ENCODE measurements at regions of chr12 and their contacts with region 1.

Region 1: DNA sequence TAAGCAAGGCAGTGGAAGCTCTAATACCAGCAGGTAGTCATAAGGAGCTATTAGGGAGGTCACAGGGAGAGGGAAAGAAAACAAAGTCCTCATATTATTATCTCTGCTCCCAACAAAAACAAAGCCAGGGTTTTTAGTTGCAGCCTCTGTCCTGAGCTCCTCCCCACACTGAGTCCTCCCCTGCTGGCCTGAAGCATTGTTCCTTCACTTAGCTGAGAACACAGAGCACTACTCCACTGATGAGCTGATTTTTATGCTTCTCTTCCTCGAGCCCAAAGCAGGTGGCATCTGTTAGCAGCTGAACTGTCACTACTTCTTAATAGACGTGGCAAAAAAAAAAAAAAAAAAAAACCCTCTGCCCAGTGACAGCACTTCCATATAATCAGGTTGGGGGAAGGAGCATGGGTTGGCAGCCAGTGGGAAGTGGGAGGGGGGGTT is 10.5 kb upstream of the STAC3 start:
- DNase-seq: no peak
- ATAC-seq: no peak
- H3K4me3 ChIP-seq: no peak overlapping the region
- H3K27ac ChIP-seq: no peak overlapping the region
- H3K4me1 ChIP-seq: no peaks in the 10 kb centered on the region
- H3K27me3 ChIP-seq: no peaks in the 10 kb centered on the region
- CTCF ChIP-seq: no peak
- EP300 ChIP-seq: no peak
- POLR2A ChIP-seq: no peak
- RAD21 ChIP-seq: no peak

Region 2: GRCh38 chr12:57213058-57213715 is 48.3 kb before region 1 on chr12:
- CTCF ChIA-PET with region 1: interaction called, 13 read pairs
- POLR2A ChIA-PET with region 1: no interaction called
- RAD21 ChIA-PET with region 1: no interaction called
- SMC1A ChIA-PET with region 1: no interaction called
- in situ Hi-C with region 1: no loop called
- intact Hi-C with region 1: no loop called
- DNase-seq: peak; percentile 27
- ATAC-seq: peak; percentile 79
- H3K4me3 ChIP-seq: no peak overlapping the region
- H3K27ac ChIP-seq: no peak overlapping the region
- H3K4me1 ChIP-seq: peaks cover 13% of the 10 kb centered on the region
- H3K27me3 ChIP-seq: peaks cover 16 to 20% of the 10 kb centered on the region in 2 experiments
- CTCF ChIP-seq: peak; percentile 94 to 97 (median 97)
- EP300 ChIP-seq: no peak
- POLR2A ChIP-seq: no peak
- RAD21 ChIP-seq: peak; percentile 84

Region 3: DNA sequence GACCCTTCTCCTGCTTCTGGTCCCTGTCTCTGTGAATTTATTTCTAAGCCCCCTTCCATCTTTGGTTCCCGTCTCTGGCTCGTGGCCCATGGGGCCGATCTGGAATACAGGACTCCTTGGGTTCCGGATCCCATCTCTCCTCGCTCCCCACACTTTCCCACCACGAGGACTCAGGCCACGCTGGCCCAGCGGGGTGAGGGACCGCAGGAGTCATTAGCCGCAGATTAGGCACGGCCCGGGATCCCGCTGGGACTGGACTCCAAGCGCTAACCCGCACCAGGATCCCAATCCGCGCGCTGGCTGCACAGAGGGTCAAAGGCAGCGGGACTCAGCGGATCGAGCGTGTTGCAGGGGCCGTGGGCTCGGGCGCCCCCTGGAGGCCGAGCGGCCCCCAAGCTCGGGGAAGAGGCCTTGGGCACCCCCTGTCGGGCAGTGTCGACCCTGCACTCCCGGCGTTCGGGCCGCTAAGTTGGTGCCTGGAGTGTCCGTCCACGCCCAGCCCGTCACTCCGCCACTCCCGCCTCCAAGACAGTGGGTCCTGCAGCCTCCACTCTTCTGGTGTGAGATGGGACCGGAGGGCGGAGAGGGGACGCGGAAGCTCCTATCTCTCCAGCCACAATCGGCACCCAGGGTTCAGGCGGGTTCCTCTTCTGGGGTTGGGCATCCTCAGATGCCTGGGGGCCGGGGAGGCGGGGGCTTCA is 22.4 kb before region 1 on chr12:
- CTCF ChIA-PET with region 1: interaction called, 15 read pairs
- POLR2A ChIA-PET with region 1: interaction called, 5 read pairs
- RAD21 ChIA-PET with region 1: no interaction called
- SMC1A ChIA-PET with region 1: interaction called, 4 read pairs
- in situ Hi-C with region 1: no loop called
- intact Hi-C with region 1: no loop called
- DNase-seq: no peak
- ATAC-seq: peak; percentile 72
- H3K4me3 ChIP-seq: peak overlapping the region; percentile 68
- H3K27ac ChIP-seq: no peak overlapping the region
- H3K4me1 ChIP-seq: peaks cover 47% of the 10 kb centered on the region
- H3K27me3 ChIP-seq: peaks cover 5 to 8% of the 10 kb centered on the region in 2 experiments; a peak in 3 of 4 replicates
- CTCF ChIP-seq: peak; percentile 100; a peak in 5 of 6 replicates
- EP300 ChIP-seq: no peak
- POLR2A ChIP-seq: peak; percentile 66; the same call in 1 of the 2 replicates
- RAD21 ChIP-seq: peak; percentile 88

Region 4: GRCh38 chr12:57272337-57273151 is 11.1 kb after region 1 on chr12:
- CTCF ChIA-PET with region 1: interaction called, 40 read pairs
- POLR2A ChIA-PET with region 1: interaction called, 8 read pairs
- RAD21 ChIA-PET with region 1: no interaction called
- SMC1A ChIA-PET with region 1: interaction called, 9 read pairs
- in situ Hi-C with region 1: no loop called
- intact Hi-C with region 1: no loop called
- DNase-seq: no peak
- ATAC-seq: no peak
- H3K4me3 ChIP-seq: no peak overlapping the region
- H3K27ac ChIP-seq: no peak overlapping the region
- H3K4me1 ChIP-seq: no peaks in the 10 kb centered on the region
- H3K27me3 ChIP-seq: no peaks in the 10 kb centered on the region
- CTCF ChIP-seq: no peak
- EP300 ChIP-seq: no peak
- POLR2A ChIP-seq: no peak
- RAD21 ChIP-seq: no peak

Region 5: GRCh38 chr12:57280211-57281062 is 19.0 kb after region 1 on chr12:
- CTCF ChIA-PET with region 1: interaction called, 40 read pairs
- POLR2A ChIA-PET with region 1: interaction called, 8 read pairs
- RAD21 ChIA-PET with region 1: interaction called, 3 read pairs
- SMC1A ChIA-PET with region 1: interaction called, 9 read pairs
- in situ Hi-C with region 1: no loop called
- intact Hi-C with region 1: no loop called
- DNase-seq: peak; percentile 74
- ATAC-seq: peak; percentile 99
- H3K4me3 ChIP-seq: no peak overlapping the region
- H3K27ac ChIP-seq: peak overlapping the region; percentile 61
- H3K4me1 ChIP-seq: peaks cover 12% of the 10 kb centered on the region
- H3K27me3 ChIP-seq: no peaks in the 10 kb centered on the region
- CTCF ChIP-seq: no peak
- EP300 ChIP-seq: 0 out of 4 replicates have a peak, but pooled peaks of 1 of the 2 experiments have one; percentile 6
- POLR2A ChIP-seq: peak; percentile 79
- RAD21 ChIP-seq: no peak

Region 6: GRCh38 chr12:57309420-57309819 is 48.0 kb after region 1 on chr12:
- CTCF ChIA-PET with region 1: interaction called, 10 read pairs
- POLR2A ChIA-PET with region 1: no interaction called
- RAD21 ChIA-PET with region 1: interaction called, 6 read pairs
- SMC1A ChIA-PET with region 1: interaction called, 3 read pairs
- in situ Hi-C with region 1: no loop called
- intact Hi-C with region 1: no loop called
- DNase-seq: no peak
- ATAC-seq: no peak
- H3K4me3 ChIP-seq: no peak overlapping the region
- H3K27ac ChIP-seq: no peak overlapping the region
- H3K4me1 ChIP-seq: no peaks in the 10 kb centered on the region
- H3K27me3 ChIP-seq: no peaks in the 10 kb centered on the region
- CTCF ChIP-seq: no peak
- EP300 ChIP-seq: no peak
- POLR2A ChIP-seq: no peak
- RAD21 ChIP-seq: no peak

Region 7: DNA sequence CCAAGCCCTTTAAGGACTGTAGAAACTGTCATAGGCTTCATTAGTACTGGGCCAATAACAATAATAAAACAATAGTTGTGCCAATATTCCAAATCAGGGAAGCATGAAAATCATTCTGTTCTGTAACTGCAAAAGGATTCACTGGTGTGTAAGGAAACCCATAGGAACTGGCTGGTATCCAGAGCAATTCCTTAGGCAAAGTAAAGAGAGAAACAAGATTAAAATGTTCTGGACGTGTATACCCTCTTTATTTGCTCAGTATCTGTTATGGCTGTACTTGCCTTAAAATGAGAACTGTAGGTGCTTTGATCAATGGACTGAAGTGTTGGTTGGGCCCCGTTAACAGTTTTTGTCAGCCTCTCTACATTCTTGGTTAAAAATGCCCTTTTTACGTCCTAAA is 62.0 kb after region 1 on chr12:
- CTCF ChIA-PET with region 1: no interaction called
- POLR2A ChIA-PET with region 1: no interaction called
- RAD21 ChIA-PET with region 1: no interaction called
- SMC1A ChIA-PET with region 1: no interaction called
- in situ Hi-C with region 1: no loop called
- intact Hi-C with region 1: no loop called
- DNase-seq: no peak
- ATAC-seq: no peak
- H3K4me3 ChIP-seq: no peak overlapping the region
- H3K27ac ChIP-seq: no peak overlapping the region
- H3K4me1 ChIP-seq: no peaks in the 10 kb centered on the region
- H3K27me3 ChIP-seq: no peaks in the 10 kb centered on the region
- CTCF ChIP-seq: no peak
- EP300 ChIP-seq: no peak
- POLR2A ChIP-seq: no peak
- RAD21 ChIP-seq: no peak

Measured in GM12878 (cell line).